Activated B cell treated with CpG ODN at 0.5 μM for 24 hours (primary cell): ENCODE measurements at regions of chr9 and their contacts with region 1.

Region 1: DNA sequence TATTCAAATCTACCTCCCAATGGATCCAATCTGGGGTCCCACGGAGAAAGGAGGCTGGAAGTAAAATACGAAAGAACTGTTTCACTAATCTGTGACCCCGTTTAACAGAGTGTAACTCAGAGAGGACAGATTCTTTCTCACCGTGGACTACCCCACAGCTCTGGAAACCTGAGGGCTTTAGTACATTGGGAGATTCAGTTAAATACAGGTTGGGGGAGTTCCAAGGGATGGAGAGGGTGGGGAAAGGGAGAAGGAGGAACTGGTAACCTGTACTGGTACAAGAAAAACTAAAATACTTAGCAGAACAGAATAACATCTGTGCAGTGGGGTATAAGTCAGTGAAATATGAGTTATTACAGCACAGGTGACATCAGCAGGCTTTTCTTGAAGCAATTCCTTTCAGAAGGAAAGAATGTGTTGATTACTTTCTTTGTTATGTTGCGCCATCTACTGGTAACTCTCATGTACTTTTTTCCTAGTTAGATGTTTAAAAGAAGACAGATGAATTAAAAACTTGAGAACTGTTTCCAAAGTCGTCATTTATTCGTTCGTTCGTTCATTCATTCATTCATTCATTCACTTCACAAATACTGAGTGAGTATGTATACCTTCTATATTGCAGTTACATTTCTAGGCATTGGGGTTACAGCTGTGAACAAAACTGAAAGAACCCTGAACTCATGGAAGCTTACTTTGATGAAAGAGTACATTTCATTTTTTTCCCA is 30.0 kb upstream of the STOM start:
- DNase-seq: no peak
- ATAC-seq: peak; percentile 42
- H3K4me3 Mint-ChIP-seq: no peak overlapping the region
- H3K27ac Mint-ChIP-seq: no peak overlapping the region
- H3K4me1 Mint-ChIP-seq: no peaks in the 10 kb centered on the region
- H3K27me3 Mint-ChIP-seq: no peaks in the 10 kb centered on the region
- CTCF ChIP-seq: peak; percentile 77

Region 2: GRCh38 chr9:120619751-120620655 is 780.0 kb before region 1 on chr9:
- CTCF ChIA-PET with region 1: interaction called, 3 read pairs
- POLR2A ChIA-PET with region 1: no interaction called
- intact Hi-C with region 1: loop called (anchors 2 kb)
- DNase-seq: no peak
- ATAC-seq: peak; percentile 79
- H3K4me3 Mint-ChIP-seq: no peak overlapping the region
- H3K27ac Mint-ChIP-seq: no peak overlapping the region
- H3K4me1 Mint-ChIP-seq: peaks cover 2% of the 10 kb centered on the region
- H3K27me3 Mint-ChIP-seq: no peaks in the 10 kb centered on the region
- CTCF ChIP-seq: peak; percentile 99

Region 3: DNA sequence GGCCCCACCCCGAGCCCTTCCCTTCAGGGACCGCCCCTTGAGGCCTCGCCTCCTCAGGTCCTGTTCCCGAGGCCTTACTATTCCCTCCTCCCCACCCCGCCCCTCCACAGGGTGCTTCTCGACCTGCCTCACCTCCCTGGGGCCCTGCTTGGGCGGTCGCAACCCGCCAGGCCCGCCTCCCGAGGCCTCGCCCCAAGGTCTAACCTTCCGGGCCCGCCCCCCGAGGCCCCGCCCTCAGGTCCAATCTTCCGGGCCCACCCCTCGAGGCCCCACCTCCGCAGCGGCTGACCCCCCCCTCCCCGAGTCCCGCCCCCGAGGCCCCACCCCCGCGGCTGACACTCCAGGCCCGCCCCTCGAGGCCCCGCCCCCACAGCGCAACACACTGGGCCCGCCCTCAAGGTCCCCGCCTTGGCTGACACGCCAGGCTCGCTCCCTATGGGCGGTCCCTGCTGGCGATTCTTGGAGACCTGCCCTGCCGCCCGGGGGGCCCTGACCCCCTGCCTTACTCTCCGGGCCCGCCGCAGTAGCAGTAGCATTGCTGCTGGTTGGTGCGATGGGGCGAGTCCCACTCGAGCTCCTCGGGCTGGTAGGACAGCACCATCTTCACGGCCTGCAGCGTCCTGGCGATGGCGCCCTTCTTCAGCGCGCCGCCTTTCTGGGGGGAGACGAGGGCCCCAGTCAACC is 531.2 kb before region 1 on chr9:
- CTCF ChIA-PET with region 1: no interaction called
- POLR2A ChIA-PET with region 1: no interaction called
- intact Hi-C with region 1: no loop called
- DNase-seq: peak; percentile 96
- ATAC-seq: peak; percentile 92
- H3K4me3 Mint-ChIP-seq: peak overlapping the region; percentile 91
- H3K27ac Mint-ChIP-seq: peak overlapping the region; percentile 97
- H3K4me1 Mint-ChIP-seq: peaks cover 25% of the 10 kb centered on the region
- H3K27me3 Mint-ChIP-seq: no peaks in the 10 kb centered on the region
- CTCF ChIP-seq: no peak

Region 4: GRCh38 chr9:120985810-120986222 is 414.2 kb before region 1 on chr9:
- CTCF ChIA-PET with region 1: interaction called, 7 read pairs
- POLR2A ChIA-PET with region 1: no interaction called
- intact Hi-C with region 1: loop called (anchors 1 kb)
- DNase-seq: no peak
- ATAC-seq: no peak
- H3K4me3 Mint-ChIP-seq: no peak overlapping the region
- H3K27ac Mint-ChIP-seq: no peak overlapping the region
- H3K4me1 Mint-ChIP-seq: no peaks in the 10 kb centered on the region
- H3K27me3 Mint-ChIP-seq: no peaks in the 10 kb centered on the region
- CTCF ChIP-seq: no peak

Region 5: GRCh38 chr9:121213136-121213806 is 186.8 kb before region 1 on chr9:
- CTCF ChIA-PET with region 1: interaction called, 38 read pairs
- POLR2A ChIA-PET with region 1: no interaction called
- intact Hi-C with region 1: loop called (anchors 1 kb)
- DNase-seq: peak; percentile 57
- ATAC-seq: peak; percentile 76
- H3K4me3 Mint-ChIP-seq: no peak overlapping the region
- H3K27ac Mint-ChIP-seq: peak overlapping the region; percentile 59
- H3K4me1 Mint-ChIP-seq: peaks cover 24% of the 10 kb centered on the region
- H3K27me3 Mint-ChIP-seq: no peaks in the 10 kb centered on the region
- CTCF ChIP-seq: peak; percentile 53

Region 6: DNA sequence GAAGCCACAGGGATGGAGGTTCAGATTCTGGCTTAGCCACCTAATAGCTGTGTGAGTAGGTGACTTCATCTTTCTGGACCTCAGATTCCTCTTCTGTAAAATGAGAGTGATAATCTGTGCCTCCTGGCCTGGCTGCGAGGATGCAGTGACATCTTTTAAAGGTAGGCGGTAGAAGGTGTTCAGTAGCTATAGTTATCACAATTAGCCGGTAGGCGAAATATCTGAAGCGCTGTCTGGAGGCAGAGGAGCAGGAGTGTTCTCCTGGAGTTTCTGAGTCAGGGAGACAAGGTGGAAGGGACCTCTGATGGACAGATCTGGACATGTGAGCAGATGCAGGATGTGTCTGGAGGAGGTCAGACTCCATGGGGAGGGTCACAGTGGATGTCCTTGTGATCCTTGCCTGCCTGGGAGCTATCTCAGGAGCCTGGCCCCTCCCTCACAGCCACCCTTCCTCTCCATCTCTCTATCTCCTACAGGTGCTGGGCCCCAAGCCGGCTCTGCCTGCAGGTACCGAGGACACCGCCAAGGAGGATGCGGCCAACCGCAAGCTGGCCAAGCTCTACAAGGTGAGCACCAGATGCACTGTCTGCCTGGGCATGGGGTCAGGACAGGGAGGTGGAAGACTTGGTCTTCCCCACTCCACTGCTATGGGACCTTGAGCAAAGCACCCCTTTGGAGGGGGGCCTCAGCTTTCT is 86.4 kb before region 1 on chr9:
- CTCF ChIA-PET with region 1: interaction called, 243 read pairs
- POLR2A ChIA-PET with region 1: no interaction called
- intact Hi-C with region 1: no loop called
- DNase-seq: no peak
- ATAC-seq: no peak
- H3K4me3 Mint-ChIP-seq: no peak overlapping the region
- H3K27ac Mint-ChIP-seq: no peak overlapping the region
- H3K4me1 Mint-ChIP-seq: no peaks in the 10 kb centered on the region
- H3K27me3 Mint-ChIP-seq: no peaks in the 10 kb centered on the region
- CTCF ChIP-seq: no peak

Region 7: GRCh38 chr9:121362813-121363621 is 37.0 kb before region 1 on chr9:
- CTCF ChIA-PET with region 1: no interaction called
- POLR2A ChIA-PET with region 1: no interaction called
- intact Hi-C with region 1: no loop called
- DNase-seq: no peak
- ATAC-seq: no peak
- H3K4me3 Mint-ChIP-seq: no peak overlapping the region
- H3K27ac Mint-ChIP-seq: no peak overlapping the region
- H3K4me1 Mint-ChIP-seq: peaks cover 19% of the 10 kb centered on the region
- H3K27me3 Mint-ChIP-seq: no peaks in the 10 kb centered on the region
- CTCF ChIP-seq: no peak

Region 8: GRCh38 chr9:121424024-121424432 is 24.0 kb after region 1 on chr9:
- CTCF ChIA-PET with region 1: no interaction called
- POLR2A ChIA-PET with region 1: no interaction called
- intact Hi-C with region 1: no loop called
- DNase-seq: no peak
- ATAC-seq: no peak
- H3K4me3 Mint-ChIP-seq: no peak overlapping the region
- H3K27ac Mint-ChIP-seq: no peak overlapping the region
- H3K4me1 Mint-ChIP-seq: no peaks in the 10 kb centered on the region
- H3K27me3 Mint-ChIP-seq: no peaks in the 10 kb centered on the region
- CTCF ChIP-seq: no peak